ENCODE measurements at regions of chr6 and their contacts with region 1.

Region 1: DNA sequence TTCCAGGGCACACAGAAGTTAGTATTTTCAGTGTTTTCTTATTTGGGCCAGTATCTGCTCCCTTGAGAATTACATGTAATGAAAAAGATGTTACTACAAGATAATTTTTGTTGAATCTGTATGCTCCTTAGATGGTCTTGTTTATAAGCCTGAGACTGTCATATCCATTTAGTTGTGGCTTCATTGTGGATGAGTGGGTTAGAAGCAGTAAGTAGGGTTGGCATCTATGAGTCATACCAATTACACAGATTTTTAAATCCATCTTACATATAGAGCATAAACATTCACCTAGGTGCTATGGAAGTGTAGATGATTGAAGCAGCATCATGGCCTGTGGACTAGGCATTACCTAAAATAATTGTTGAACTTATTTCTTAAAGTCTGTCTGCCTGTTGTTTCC is 13.5 kb upstream of the BAG2 start:
- DNase-seq: no peak
- ATAC-seq: no peak
- H3K4me3 ChIP-seq: no peak overlapping the region
- H3K27ac ChIP-seq: no peak overlapping the region
- H3K4me1 ChIP-seq: no peaks in the 10 kb centered on the region
- H3K27me3 ChIP-seq: no peaks in the 10 kb centered on the region
- CTCF ChIP-seq: no peak

Region 2: GRCh38 chr6:56955171-56956045 is 203.2 kb before region 1 on chr6:
- intact Hi-C with region 1: no loop called
- DNase-seq: peak; percentile 76 to 81
- ATAC-seq: peak; percentile 43 to 92 (median 84)
- H3K4me3 ChIP-seq: peak overlapping the region; percentile 15 to 65 (median 58)
- H3K27ac ChIP-seq: peak overlapping the region in 2 of 10 donors; percentile 10 to 17
- H3K4me1 ChIP-seq: peaks cover 0 to 27% (median 17%) of the 10 kb centered on the region in 9 donors
- H3K27me3 ChIP-seq: peaks cover 0 to 48% (median 15%) of the 10 kb centered on the region in 7 donors
- CTCF ChIP-seq: peak; percentile 26 to 80 (median 65)

Region 3: DNA sequence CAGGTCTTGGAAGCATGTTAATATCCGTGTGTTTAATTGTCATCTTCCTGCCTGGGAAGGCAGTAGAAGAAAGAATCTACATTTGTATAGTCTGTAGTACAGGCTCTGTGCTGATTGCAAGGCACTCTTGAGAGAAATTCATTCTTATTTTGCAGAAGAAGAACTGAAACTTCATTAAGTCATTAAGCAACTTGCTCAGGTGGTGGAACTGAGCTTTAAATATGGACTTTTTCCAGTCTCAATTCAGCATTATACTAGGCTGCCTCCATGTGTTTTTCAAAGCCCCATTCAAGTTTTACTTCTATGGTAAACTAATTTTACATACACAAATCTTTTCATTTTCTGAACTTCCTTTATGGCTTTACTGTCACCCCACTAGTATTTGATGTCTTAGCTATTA is 50.0 kb before region 1 on chr6:
- intact Hi-C with region 1: loop called in 1 of 10 experiments (anchors 10 kb)
- DNase-seq: no peak
- ATAC-seq: no peak
- H3K4me3 ChIP-seq: no peak overlapping the region
- H3K27ac ChIP-seq: no peak overlapping the region
- H3K4me1 ChIP-seq: peaks cover 0 to 32% (median 0%) of the 10 kb centered on the region in 9 donors
- H3K27me3 ChIP-seq: no peaks in the 10 kb centered on the region
- CTCF ChIP-seq: no peak